ENCODE measurements at regions of chr11 and their contacts with region 1.

Region 1: DNA sequence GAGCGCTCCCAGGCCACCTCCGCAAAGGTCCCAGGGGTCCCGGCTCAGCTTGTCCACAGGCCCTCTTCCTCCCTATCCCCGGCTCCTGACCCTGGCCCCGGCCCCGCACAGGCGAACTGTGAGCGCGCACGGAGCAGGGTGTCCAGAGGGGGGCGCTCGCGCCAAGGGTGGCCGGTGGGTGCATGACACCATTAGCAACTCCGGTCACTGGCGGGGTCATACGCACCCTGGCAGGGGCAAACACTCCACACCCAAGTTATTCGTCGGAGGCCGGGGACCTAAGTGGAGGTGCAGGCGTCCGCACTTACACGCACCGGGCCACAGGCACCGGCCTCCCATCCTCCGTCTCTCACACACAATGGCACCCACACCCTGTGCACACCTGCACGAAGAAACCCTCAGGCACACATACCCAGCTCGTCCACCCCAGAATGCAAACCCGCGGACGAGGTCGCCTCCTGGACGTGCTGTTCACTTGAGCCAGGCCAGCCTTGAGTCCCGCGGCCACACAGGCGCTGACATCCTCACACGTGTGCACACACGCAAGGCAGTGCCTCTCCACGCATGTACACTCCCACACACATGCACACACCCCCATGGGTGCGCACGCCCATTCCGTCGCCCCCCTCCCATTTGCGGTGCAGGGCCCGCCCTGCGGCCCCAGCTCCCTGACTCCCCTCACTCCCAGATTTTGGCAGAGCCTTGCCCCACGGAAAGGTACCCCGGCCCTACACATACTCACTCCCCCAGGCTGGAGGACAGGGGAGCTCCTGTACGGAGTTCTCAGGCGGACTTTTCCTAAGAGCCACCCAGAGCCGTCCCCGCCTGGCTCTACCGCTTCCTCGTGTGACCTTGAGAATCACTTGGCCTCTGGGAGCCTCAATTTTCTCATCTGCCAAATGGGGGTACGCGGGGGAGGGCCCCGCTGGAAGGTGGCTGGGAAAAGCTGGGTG is at the start of gene RASGRP2:
- DNase-seq: peak; percentile 97
- total RNA-seq, gene RASGRP2: 30.8 TPM

Region 2: DNA sequence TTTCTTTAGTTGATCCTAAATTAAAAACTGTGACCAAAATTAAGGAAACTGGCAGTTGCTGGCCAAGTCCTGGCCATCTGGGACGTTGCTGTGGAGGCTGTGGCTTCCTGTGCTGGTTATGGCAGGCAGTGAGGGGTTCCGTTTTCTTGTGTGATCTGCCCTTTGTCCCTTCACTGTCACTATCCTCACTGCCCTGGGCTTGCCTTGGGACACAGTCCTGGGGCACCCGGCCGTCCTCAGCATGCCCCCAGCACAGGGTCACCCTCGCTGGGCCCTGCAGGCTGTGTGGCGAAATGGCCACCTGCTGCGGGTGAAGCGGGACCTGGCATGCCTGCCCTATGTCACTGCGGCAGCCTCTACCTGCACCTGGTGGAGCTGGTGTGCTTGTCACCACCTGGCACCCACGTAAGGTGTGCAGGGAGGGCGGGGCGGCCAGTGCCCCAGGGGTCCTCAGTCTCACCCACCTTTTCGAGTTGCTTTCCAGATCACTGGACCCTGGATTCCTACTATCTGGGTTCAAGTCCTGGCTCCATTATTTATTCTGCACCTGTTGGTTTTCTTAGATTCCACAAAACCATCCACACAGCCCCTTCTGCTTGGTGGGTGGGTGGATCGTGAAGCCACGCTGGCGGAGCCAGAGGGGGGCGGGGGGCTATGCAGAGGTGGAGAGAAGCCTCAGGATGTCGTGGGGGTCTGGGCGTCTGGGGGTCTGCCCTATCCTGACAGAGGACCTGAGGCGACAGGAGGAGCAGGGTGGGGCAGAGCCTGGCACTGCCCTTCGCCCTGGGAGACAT is 205.2 kb before region 1 on chr11:
- intact Hi-C with region 1: no loop called
- DNase-seq: no peak

Region 3: GRCh38 chr11:64778508-64779346 is 34.9 kb after region 1 on chr11 and contains the start of gene SF1:
- intact Hi-C with region 1: loop called (anchors 1 kb)
- DNase-seq: peak; percentile 99
- total RNA-seq, gene SF1: 175 TPM

Region 4: GRCh38 chr11:64976651-64977050 is 232.8 kb after region 1 on chr11:
- intact Hi-C with region 1: no loop called
- DNase-seq: no peak

Measured in cardiac septum (tissue), 1 donor.